ENCODE measurements at regions of chr5 and their contacts with region 1.

Region 1: GRCh38 chr5:39547553-39548154 is 122.9 kb upstream of the DAB2 start:
- DNase-seq: no peak
- H3K4me3 ChIP-seq: no peak overlapping the region
- CTCF ChIP-seq: peak; percentile 44

Region 2: DNA sequence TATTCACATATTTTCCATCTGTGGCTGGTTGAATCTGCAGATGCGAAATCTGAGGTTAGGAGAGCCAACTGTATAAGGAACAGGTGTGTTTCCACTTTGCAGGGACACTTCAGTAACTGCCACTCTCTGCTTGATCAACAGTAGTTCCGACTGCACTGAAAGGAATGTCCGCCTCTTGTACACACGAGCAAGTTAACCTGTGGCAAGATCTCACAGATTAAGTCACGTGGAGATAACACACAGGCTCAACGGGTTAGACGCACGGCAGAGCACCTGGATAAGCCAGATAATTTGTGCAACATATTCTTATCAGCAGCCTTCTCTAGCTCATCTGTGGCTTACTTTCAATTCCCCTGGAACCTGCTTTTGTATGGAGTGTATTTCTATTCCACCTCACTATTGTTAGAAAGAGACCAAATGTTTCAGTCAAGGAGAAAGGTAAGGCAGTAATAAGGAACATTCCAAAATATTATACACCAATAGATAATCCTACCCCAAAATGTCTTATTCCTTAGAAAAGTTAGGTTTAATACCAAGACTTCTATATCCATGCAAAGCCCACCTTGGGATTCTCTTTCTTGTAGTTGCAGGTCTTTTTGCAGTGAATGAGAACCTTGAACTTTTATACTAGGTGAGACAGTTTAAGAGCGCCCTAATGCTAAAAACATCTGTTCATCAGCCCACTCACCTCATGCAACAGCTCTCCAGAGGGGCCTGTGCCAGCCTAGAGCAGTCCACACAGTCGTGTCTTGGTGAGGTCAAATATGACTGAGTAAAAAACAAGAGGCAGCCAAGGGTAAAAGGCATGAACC is 176.9 kb before region 1 on chr5:
- CTCF ChIA-PET with region 1: interaction called, 70 read pairs
- POLR2A ChIA-PET with region 1: no interaction called
- DNase-seq: no peak
- H3K4me3 ChIP-seq: no peak overlapping the region
- CTCF ChIP-seq: no peak

Region 3: DNA sequence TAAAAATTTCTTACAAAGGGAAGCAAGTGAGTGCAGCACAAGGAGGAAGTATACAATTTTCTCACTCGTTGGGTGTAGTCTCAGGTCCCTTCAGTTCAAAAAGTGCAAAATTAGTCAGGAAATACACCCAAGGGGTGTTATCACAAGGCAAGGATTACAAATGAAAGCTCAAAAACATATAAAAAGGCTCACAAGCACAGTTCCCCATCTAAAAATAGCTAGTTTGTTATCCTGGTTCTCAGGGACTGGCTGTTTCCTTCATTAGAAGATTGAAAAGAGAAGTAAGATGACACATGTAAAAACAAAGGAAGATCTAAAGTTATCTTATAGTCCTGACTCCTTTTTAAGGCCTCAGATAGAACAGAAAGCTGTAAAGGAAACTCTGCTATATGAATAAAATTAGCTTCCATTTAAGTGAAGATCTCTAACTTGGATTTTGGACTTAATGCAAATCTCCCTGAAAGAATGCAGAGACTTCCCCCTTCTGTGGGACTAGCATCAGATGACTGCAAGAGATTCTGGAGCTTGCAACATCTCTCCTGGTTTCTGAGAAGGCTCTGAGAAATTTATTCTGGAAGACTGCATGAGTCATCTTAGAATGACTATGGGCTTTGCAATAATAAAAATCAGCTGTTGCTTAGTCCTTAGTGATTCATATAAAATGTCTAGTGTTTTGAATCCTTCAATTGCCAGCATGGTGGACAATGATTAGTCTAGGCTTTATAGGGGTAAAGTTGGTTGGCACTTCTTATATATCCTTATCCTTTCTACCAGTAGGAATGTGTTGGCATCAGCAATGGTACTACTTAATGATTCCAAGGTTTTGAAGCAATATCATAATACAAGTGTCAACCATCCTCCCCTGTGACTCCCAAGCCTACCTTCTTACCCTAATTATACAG is 148.3 kb before region 1 on chr5:
- CTCF ChIA-PET with region 1: interaction called, 76 read pairs
- POLR2A ChIA-PET with region 1: interaction called, 4 read pairs
- DNase-seq: peak; percentile 94
- H3K4me3 ChIP-seq: no peak overlapping the region
- CTCF ChIP-seq: no peak

Region 4: GRCh38 chr5:39417979-39418378 is 129.7 kb before region 1 on chr5:
- CTCF ChIA-PET with region 1: interaction called, 111 read pairs
- POLR2A ChIA-PET with region 1: interaction called, 39 read pairs
- DNase-seq: no peak
- H3K4me3 ChIP-seq: no peak overlapping the region
- CTCF ChIP-seq: no peak

Region 5: GRCh38 chr5:39520232-39520572 is 27.5 kb before region 1 on chr5:
- CTCF ChIA-PET with region 1: interaction called, 10 read pairs
- POLR2A ChIA-PET with region 1: interaction called, 6 read pairs
- DNase-seq: peak; percentile 83
- H3K4me3 ChIP-seq: no peak overlapping the region
- CTCF ChIP-seq: no peak

Region 6: DNA sequence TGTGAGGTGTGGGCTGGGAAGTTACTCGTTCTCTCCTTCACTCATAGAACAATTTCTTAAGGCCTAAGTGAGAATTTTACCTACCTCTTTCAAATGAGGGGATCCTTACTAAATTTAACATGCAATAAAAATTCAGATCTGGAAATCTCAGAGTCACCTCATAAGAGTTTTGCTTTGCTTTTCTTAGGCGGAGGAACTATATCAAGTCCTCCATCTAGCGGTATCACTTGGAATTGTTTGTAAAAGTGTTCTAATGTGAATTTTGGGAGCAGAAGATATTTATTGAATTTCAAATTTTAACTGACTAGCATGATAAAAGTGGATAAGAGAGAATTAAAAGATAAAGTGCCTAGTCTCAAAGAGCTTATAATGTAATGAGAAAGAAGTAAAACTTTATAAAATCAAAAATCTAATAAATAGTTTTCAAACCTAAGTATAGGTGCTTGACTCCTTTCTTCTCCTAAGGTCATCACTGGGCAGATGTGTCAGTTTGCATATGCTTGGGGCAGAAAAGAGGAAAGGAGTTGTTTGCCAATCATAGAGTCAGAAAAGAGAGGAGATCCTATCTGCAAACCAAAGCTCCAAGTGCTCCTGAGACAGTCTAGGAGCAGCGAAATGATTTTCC is 22.9 kb after region 1 on chr5:
- CTCF ChIA-PET with region 1: interaction called, 20 read pairs
- POLR2A ChIA-PET with region 1: no interaction called
- DNase-seq: no peak
- H3K4me3 ChIP-seq: no peak overlapping the region
- CTCF ChIP-seq: peak; percentile 33